Transverse colon (tissue), 4 donors: ENCODE measurements at regions of chr12 and their contacts with region 1.

Region 1: GRCh38 chr12:17763366-17763765 is 326.6 kb downstream of the RERGL start:
- DNase-seq: no peak
- H3K4me3 ChIP-seq: no peak overlapping the region
- H3K27ac ChIP-seq: no peak overlapping the region
- H3K4me1 ChIP-seq: no peaks in the 10 kb centered on the region
- H3K27me3 ChIP-seq: no peaks in the 10 kb centered on the region
- CTCF ChIP-seq: no peak
- EP300 ChIP-seq: no peak
- POLR2A ChIP-seq: no peak

Region 2: GRCh38 chr12:17642340-17642650 is 121.1 kb before region 1 on chr12:
- in situ Hi-C with region 1: no loop called
- intact Hi-C with region 1: no loop called
- DNase-seq: no peak
- H3K4me3 ChIP-seq: no peak overlapping the region
- H3K27ac ChIP-seq: no peak overlapping the region
- H3K4me1 ChIP-seq: no peaks in the 10 kb centered on the region
- H3K27me3 ChIP-seq: no peaks in the 10 kb centered on the region
- CTCF ChIP-seq: peak in 1 of 5 experiments; percentile 3
- EP300 ChIP-seq: no peak
- POLR2A ChIP-seq: no peak

Region 3: DNA sequence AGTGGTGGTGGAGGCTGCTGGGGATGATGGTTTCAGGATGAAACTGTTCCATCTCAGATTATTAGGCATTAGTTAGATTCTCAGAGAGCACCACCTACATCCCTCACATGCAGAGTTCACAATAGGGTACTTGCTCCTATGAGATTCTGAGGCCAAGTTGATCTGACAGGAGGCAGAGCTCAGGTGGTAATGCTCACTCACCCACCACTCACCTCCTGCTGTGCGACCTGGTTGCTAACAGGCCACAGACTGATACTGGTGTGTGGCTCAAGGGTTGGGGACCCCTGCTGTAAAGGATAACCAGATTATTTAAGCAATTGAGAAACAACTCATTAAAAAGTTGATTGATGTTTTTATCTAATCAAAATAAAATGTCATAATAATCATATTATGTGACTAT is 78.1 kb after region 1 on chr12:
- in situ Hi-C with region 1: loop called in 1 of 4 experiments (anchors 10 kb)
- intact Hi-C with region 1: no loop called
- DNase-seq: no peak
- H3K4me3 ChIP-seq: no peak overlapping the region
- H3K27ac ChIP-seq: no peak overlapping the region
- H3K4me1 ChIP-seq: no peaks in the 10 kb centered on the region
- H3K27me3 ChIP-seq: no peaks in the 10 kb centered on the region
- CTCF ChIP-seq: no peak
- EP300 ChIP-seq: no peak
- POLR2A ChIP-seq: no peak

Region 4: GRCh38 chr12:17853054-17853453 is 89.7 kb after region 1 on chr12:
- in situ Hi-C with region 1: loop called in 3 of 4 experiments (anchors 5 to 10 kb)
- intact Hi-C with region 1: no loop called
- DNase-seq: no peak
- H3K4me3 ChIP-seq: no peak overlapping the region
- H3K27ac ChIP-seq: no peak overlapping the region
- H3K4me1 ChIP-seq: no peaks in the 10 kb centered on the region
- H3K27me3 ChIP-seq: no peaks in the 10 kb centered on the region
- CTCF ChIP-seq: no peak
- EP300 ChIP-seq: no peak
- POLR2A ChIP-seq: no peak

Region 5: GRCh38 chr12:17918013-17918412 is 154.6 kb after region 1 on chr12:
- in situ Hi-C with region 1: no loop called
- intact Hi-C with region 1: no loop called
- DNase-seq: no peak
- H3K4me3 ChIP-seq: no peak overlapping the region
- H3K27ac ChIP-seq: no peak overlapping the region
- H3K4me1 ChIP-seq: no peaks in the 10 kb centered on the region
- H3K27me3 ChIP-seq: no peaks in the 10 kb centered on the region
- CTCF ChIP-seq: no peak
- EP300 ChIP-seq: no peak
- POLR2A ChIP-seq: no peak

Region 6: GRCh38 chr12:18171571-18171970 is 408.2 kb after region 1 on chr12:
- in situ Hi-C with region 1: no loop called
- intact Hi-C with region 1: no loop called
- DNase-seq: no peak
- H3K4me3 ChIP-seq: no peak overlapping the region
- H3K27ac ChIP-seq: no peak overlapping the region
- H3K4me1 ChIP-seq: no peaks in the 10 kb centered on the region
- H3K27me3 ChIP-seq: no peaks in the 10 kb centered on the region
- CTCF ChIP-seq: no peak
- EP300 ChIP-seq: no peak
- POLR2A ChIP-seq: no peak